Sigmoid colon (tissue), 7 donors: ENCODE measurements at regions of chr15 and their contacts with region 1.

Region 1: DNA sequence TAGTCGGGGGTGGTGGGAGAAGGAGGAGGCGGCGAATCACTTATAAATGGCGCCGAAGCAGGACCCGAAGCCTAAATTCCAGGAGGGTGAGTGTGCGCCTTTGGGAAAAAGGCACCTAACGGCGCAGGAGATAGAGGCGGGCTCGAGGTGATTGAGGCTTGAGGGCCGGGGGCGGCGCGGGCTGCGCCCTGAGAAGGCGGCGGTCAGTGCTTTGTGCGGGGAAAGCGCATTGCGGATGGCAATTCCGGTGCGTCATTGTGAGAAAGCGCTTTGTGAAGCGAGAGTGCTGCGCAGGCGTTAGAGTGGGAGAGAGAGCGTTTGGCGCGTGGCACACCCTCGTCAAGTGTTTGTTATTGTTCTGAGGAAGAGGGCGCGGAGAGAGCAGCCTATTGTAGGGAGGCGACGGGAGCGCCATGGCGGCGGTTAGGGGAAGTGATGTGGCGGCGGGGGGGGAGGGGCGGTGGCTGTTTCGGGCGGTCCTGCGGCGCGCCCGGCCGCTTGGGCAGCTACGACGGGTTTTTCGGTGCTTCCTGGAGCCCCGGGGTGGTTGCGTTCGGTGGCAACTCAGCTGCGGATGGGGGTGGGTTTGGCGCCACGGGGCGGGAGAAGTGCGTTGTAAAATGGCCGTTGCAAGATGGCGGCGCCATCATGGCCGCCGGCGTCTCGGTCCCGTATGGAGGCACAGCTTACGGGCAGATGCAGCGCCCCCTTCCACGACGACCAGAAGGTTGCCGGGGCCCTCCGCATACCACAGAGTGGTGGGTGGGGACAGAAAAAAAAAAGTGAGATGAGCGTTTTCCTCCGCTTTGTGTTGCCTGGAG is 492 bp downstream of the MORF4L1 start:
- DNase-seq: peak; percentile 87
- H3K4me3 ChIP-seq: peak overlapping the region; percentile 74 to 99 (median 96)
- H3K27ac ChIP-seq: peak overlapping the region; percentile 95 to 100 (median 100)
- H3K4me1 ChIP-seq: peaks cover 0 to 45% (median 37%) of the 10 kb centered on the region in 4 donors
- H3K27me3 ChIP-seq: no peaks in the 10 kb centered on the region
- CTCF ChIP-seq: peak in 2 of 4 experiments; percentile 5 to 12
- EP300 ChIP-seq: peak in 1 of 4 donors; percentile 2
- POLR2A ChIP-seq: peak; percentile 90 to 94

Region 2: GRCh38 chr15:78149068-78149804 is 723.9 kb before region 1 on chr15 and contains the start of gene IDH3A:
- intact Hi-C with region 1: loop called (anchors 2 kb)
- DNase-seq: peak; percentile 100
- H3K4me3 ChIP-seq: peak within 1 kb of the TSS; percentile 63 to 98 (median 78)
- H3K27ac ChIP-seq: peak within 1 kb of the TSS; percentile 88 to 96 (median 91)
- H3K4me1 ChIP-seq: peaks cover 0 to 28% (median 19%) of the 10 kb centered on the region in 4 donors
- H3K27me3 ChIP-seq: no peaks in the 10 kb centered on the region
- CTCF ChIP-seq: no peak
- EP300 ChIP-seq: no peak
- POLR2A ChIP-seq: peak; percentile 39 to 45
- total RNA-seq, gene IDH3A: 74.9 to 106 (median 93.9) TPM

Region 3: DNA sequence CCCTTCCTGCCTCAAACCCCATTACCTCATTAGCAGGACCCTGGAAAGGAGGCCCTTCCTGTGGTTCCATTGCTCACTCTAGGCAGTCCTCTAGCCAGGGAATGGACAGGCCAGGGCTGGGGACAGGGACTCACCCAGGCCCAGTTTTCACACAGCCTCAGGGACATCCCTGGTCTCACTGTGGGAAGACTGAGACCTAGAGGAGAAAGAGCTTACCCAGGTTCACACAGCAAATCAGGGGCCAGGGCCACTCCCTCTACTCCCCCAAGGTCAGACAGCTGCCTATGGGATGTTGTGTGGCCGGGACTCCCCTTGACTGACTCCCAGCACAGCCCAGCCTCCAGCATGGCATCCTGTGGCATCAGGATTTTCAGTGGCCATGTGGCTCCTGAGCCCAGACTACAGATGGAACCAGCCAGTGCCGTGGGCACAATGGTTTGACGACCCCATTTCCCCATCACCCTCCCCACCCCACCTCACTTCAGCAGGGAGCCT is 111.2 kb before region 1 on chr15:
- intact Hi-C with region 1: loop called (anchors 5 kb)
- DNase-seq: peak; percentile 56
- H3K4me3 ChIP-seq: no peak overlapping the region
- H3K27ac ChIP-seq: peak overlapping the region in 1 of 4 donors; percentile 10
- H3K4me1 ChIP-seq: peaks cover 0 to 25% (median 19%) of the 10 kb centered on the region in 4 donors
- H3K27me3 ChIP-seq: no peaks in the 10 kb centered on the region
- CTCF ChIP-seq: no peak
- EP300 ChIP-seq: no peak
- POLR2A ChIP-seq: no peak

Region 4: GRCh38 chr15:78828920-78829319 is 44.3 kb before region 1 on chr15:
- intact Hi-C with region 1: no loop called
- DNase-seq: no peak
- H3K4me3 ChIP-seq: no peak overlapping the region
- H3K27ac ChIP-seq: peak overlapping the region in 2 of 4 donors; percentile 37 to 56
- H3K4me1 ChIP-seq: peaks cover 0 to 21% (median 12%) of the 10 kb centered on the region in 4 donors
- H3K27me3 ChIP-seq: peaks cover 0 to 3% (median 0%) of the 10 kb centered on the region in 3 donors
- CTCF ChIP-seq: no peak
- EP300 ChIP-seq: peak in 1 of 4 donors; percentile 41
- POLR2A ChIP-seq: no peak

Region 5: DNA sequence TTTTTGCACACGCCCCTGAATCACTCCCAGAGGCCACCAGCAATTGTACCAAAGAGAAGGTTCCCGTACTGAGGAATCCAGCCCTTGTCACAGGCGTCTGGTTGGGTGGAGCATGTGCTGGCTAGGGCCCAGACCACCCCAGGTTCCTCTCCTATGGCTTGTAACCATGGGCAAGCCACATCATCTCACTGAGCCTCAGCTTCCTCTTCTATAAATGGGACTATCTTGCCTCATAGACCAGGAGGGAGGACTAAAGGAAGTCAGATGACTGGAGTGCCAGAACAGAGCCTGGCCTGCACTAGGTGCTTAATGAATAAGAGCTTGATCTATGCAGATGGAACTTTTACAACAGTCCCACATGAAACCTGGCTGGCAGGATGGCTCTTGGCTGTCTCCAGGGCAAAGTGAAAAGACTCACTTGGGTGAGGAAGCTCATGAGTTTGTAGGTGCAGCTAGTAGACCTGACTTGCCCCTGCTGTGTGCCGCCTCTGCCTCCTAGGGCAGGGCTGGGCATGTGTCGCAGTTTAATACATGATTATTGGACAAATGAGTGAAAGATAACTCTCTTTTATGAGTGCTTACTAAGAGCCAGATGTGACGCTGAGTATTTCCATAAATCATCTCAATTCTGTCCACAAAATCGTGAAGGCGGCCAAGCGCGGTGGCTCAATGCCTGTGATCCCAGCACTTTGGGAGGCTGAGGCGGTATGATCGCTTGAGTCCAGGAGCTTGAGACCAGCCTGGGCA is 42.3 kb after region 1 on chr15:
- intact Hi-C with region 1: loop called (anchors 2 kb)
- DNase-seq: peak; percentile 82
- H3K4me3 ChIP-seq: no peak overlapping the region
- H3K27ac ChIP-seq: peak overlapping the region; percentile 38 to 87 (median 78)
- H3K4me1 ChIP-seq: peaks cover 0 to 68% (median 55%) of the 10 kb centered on the region in 4 donors
- H3K27me3 ChIP-seq: no peaks in the 10 kb centered on the region
- CTCF ChIP-seq: no peak
- EP300 ChIP-seq: no peak
- POLR2A ChIP-seq: no peak

Region 6: GRCh38 chr15:79370716-79371115 is 497.5 kb after region 1 on chr15:
- intact Hi-C with region 1: no loop called
- DNase-seq: no peak
- H3K4me3 ChIP-seq: no peak overlapping the region
- H3K27ac ChIP-seq: no peak overlapping the region
- H3K4me1 ChIP-seq: no peaks in the 10 kb centered on the region
- H3K27me3 ChIP-seq: no peaks in the 10 kb centered on the region
- CTCF ChIP-seq: no peak
- EP300 ChIP-seq: no peak
- POLR2A ChIP-seq: no peak